Esophagus muscularis mucosa (tissue), 4 donors: ENCODE measurements at regions of chr6 and their contacts with region 1.

Region 1: DNA sequence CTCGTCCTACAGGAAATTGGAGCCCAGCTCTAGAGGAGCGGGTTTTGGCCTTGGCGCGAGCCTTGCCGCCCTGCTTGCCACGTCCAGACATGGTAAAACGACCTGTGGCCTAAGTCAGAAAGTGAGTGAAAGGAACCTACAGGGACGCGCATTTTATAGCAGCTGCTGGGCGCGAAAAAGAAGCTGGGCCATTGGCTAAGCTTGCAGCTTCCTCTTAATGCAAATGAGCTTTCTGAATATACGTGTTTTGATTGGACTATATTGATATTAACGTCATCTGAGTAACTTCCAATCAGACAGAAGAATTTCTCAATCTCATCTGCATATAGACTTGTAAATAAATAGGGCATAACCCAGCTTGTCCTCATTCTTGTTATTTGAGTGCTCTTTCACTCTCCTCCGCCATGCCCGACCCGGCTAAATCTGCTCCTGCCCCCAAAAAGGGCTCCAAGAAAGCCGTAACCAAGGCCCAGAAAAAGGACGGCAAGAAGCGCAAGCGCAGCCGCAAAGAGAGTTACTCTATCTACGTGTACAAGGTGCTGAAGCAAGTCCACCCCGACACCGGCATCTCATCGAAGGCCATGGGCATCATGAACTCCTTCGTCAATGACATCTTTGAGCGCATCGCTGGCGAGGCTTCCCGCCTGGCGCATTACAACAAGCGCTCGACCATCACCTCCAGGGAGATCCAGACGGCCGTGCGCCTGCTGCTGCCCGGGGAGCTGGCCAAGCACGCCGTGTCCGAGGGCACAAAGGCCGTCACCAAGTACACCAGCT is 18.9 kb downstream of the OR2B2 start:
- DNase-seq: peak; percentile 94
- H3K4me3 ChIP-seq: peak overlapping the region; percentile 59 to 78 (median 67)
- H3K27ac ChIP-seq: peak overlapping the region; percentile 40 to 85 (median 50)
- H3K4me1 ChIP-seq: peaks cover 25 to 34% (median 30%) of the 10 kb centered on the region in 4 donors
- H3K27me3 ChIP-seq: peaks cover 0 to 56% (median 36%) of the 10 kb centered on the region in 4 donors
- CTCF ChIP-seq: no peak
- EP300 ChIP-seq: no peak
- POLR2A ChIP-seq: no peak

Region 2: GRCh38 chr6:26629359-26629758 is 1263.9 kb before region 1 on chr6:
- intact Hi-C with region 1: no loop called
- DNase-seq: no peak
- H3K4me3 ChIP-seq: no peak overlapping the region
- H3K27ac ChIP-seq: no peak overlapping the region
- H3K4me1 ChIP-seq: no peaks in the 10 kb centered on the region
- H3K27me3 ChIP-seq: no peaks in the 10 kb centered on the region
- CTCF ChIP-seq: no peak
- EP300 ChIP-seq: no peak
- POLR2A ChIP-seq: no peak

Region 3: DNA sequence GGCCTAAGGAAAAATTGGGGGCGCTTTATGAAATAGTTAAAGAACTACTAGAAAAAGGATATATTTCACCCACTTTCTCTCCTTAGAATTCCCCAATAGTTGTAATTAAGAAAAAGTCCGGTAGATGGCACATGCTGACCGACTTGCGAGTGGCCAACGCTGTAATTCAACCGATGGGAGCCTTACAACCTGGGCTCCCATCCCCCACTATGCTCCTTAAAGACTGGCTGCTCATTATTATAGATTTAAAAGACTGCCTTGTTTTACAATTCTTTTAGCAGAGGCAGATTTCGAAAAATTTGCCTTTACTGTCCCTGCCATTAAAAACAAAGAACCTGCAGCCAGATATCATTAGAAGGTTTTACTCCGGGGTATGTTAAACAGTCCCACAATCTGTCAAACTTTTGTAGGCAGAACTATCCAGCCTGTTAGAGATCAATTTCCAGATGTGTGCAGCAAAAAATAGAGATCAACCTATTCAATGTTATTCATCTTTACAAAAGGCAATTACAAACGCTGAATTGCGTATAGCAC is 704.3 kb before region 1 on chr6:
- intact Hi-C with region 1: loop called (anchors 5 kb)
- DNase-seq: no peak
- H3K4me3 ChIP-seq: peak overlapping the region; percentile 57 to 70 (median 66)
- H3K27ac ChIP-seq: peak overlapping the region; percentile 76 to 82 (median 80)
- H3K4me1 ChIP-seq: peaks cover 0 to 9% (median 6%) of the 10 kb centered on the region in 4 donors
- H3K27me3 ChIP-seq: peaks cover 0 to 15% (median 0%) of the 10 kb centered on the region in 4 donors
- CTCF ChIP-seq: peak; percentile 77 to 79 (median 78)
- EP300 ChIP-seq: no peak
- POLR2A ChIP-seq: no peak

Region 4: GRCh38 chr6:27503436-27504030 is 389.7 kb before region 1 on chr6:
- intact Hi-C with region 1: loop called (anchors 10 kb)
- DNase-seq: no peak
- H3K4me3 ChIP-seq: peak overlapping the region; percentile 43 to 55 (median 48)
- H3K27ac ChIP-seq: peak overlapping the region in 1 of 4 donors; percentile 15
- H3K4me1 ChIP-seq: peaks cover 7 to 15% (median 13%) of the 10 kb centered on the region in 4 donors
- H3K27me3 ChIP-seq: peaks cover 0 to 45% (median 5%) of the 10 kb centered on the region in 4 donors
- CTCF ChIP-seq: no peak
- EP300 ChIP-seq: no peak
- POLR2A ChIP-seq: no peak

Region 5: DNA sequence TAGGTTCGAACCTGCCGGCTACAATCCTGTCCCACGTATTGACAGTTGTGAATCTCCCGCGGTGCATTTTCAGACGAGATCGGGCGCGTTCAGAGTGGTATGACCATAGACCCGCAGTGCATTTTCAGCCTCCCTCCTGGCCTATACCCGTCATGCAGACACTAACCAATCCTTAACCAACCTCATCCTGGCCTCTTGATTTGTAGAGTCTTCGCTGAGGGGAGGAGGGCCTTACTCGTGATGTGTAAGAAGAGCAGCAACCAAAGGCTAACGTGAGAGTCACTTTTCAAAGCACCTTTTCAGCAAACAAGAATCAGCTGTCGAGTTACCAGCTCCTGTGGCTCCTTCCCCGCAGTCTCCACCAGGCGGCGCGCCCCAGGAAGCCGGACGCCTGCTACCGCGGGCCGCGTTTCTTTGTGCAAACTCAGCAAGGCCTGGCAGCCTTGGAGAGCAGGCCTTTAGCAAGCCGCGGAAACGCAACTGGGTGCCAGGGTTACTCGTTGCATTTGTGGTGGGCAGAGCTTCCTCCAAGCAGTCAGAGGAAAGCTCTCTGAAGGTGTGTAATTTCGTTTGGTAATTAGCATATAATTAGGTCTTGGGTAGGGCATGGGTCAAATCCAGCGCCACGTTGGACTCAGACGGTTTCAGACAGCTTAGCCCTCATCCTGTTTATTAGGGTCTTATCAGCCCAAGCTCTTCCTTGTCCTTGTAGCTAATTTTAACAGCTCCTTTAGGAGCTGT is 120.8 kb before region 1 on chr6:
- intact Hi-C with region 1: loop called (anchors 2 kb)
- DNase-seq: peak; percentile 95
- H3K4me3 ChIP-seq: peak overlapping the region in 1 of 4 donors; percentile 18
- H3K27ac ChIP-seq: no peak overlapping the region
- H3K4me1 ChIP-seq: peaks cover 0 to 11% (median 8%) of the 10 kb centered on the region in 4 donors
- H3K27me3 ChIP-seq: peaks cover 0 to 66% (median 5%) of the 10 kb centered on the region in 4 donors
- CTCF ChIP-seq: peak; percentile 87 to 94 (median 89)
- EP300 ChIP-seq: no peak
- POLR2A ChIP-seq: no peak

Region 6: GRCh38 chr6:27795697-27796494 is 97.4 kb before region 1 on chr6:
- intact Hi-C with region 1: loop called (anchors 2 kb)
- DNase-seq: no peak
- H3K4me3 ChIP-seq: no peak overlapping the region
- H3K27ac ChIP-seq: no peak overlapping the region
- H3K4me1 ChIP-seq: peaks cover 4 to 23% (median 18%) of the 10 kb centered on the region in 4 donors
- H3K27me3 ChIP-seq: peaks cover 0 to 30% (median 0%) of the 10 kb centered on the region in 4 donors
- CTCF ChIP-seq: peak; percentile 73 to 90 (median 80)
- EP300 ChIP-seq: no peak
- POLR2A ChIP-seq: no peak

Region 7: DNA sequence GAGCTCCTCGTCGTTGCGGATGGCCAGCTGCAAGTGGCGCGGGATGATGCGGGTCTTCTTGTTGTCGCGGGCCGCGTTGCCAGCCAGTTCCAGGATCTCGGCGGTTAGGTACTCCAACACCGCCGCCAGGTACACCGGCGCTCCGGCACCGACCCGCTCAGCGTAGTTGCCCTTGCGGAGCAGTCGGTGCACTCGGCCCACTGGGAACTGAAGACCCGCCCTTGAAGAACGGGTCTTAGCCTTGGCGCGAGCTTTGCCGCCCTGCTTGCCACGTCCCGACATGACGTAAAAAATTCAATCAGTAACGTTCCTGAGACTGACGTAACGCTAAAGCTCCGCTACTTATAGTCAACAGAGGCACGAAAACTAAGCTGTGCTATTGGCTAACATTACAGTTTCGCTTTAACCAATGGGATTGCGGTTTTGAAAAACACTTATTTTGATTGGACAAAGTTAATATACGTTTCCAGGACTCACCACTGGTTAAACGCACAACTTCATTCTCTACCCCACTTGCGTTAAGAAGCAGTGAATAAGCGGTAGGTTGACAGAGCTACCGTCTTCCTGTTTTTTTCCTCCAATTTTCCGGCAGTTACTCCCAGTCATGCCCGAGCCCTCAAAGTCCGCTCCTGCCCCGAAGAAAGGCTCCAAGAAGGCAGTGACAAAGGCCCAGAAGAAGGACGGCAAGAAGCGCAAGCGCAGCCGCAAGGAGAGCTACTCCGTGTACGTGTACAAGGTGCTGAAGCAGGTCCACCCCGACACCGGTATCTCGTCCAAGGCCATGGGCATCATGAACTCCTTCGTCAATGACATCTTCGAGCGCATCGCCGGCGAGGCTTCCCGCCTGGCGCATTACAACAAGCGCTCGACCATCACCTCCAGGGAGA is 54.9 kb before region 1 on chr6:
- intact Hi-C with region 1: loop called (anchors 5 kb)
- DNase-seq: peak; percentile 93
- H3K4me3 ChIP-seq: peak overlapping the region; percentile 69 to 90 (median 77)
- H3K27ac ChIP-seq: peak overlapping the region; percentile 89 to 96 (median 95)
- H3K4me1 ChIP-seq: peaks cover 18 to 30% (median 27%) of the 10 kb centered on the region in 4 donors
- H3K27me3 ChIP-seq: peaks cover 0 to 3% (median 0%) of the 10 kb centered on the region in 4 donors
- CTCF ChIP-seq: peak in 1 of 3 experiments; percentile 14
- EP300 ChIP-seq: no peak
- POLR2A ChIP-seq: peak; percentile 43

Region 8: DNA sequence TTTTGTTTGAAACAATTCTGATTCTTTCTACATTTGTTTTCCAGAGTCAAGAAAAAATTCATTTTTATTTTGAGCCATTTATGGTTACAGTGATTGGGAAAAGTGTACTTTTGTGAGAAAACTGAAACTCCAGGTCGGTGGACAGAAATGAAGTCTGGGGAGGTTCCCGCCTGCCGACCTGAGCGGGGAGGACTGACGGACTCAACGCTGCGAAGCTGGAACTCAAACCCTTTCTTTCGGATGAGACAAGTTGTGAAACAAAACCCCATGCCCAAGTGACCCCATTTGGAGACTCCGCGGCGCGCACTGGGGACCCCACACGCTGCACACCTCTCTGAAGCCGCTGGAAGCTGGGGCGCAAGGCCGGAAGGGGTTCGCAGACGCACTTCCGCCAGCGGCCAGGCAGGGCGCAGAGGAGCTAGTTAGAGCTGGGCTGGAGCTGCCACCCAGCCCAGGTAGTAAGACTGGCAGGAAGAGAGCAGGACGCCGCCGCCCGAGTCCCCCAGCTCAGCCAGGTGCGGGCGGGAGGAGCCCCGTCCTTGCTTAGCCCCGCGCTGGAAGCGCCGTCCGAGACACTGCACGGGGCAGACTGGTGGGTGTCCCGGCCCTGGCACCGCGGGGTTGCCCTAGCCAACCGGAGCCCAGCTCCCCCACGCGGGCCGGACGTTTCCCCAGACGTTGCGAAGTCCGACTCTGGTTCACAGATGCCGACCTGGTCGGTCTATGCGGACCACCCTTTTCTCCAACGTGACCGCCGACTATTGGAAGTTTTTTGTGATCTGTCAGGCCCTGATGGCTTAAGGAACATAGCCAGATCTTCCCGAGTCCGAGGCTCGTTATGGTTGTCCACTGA is 211.4 kb after region 1 on chr6:
- intact Hi-C with region 1: no loop called
- DNase-seq: peak; percentile 93
- H3K4me3 ChIP-seq: peak overlapping the region; percentile 64 to 96 (median 80)
- H3K27ac ChIP-seq: peak overlapping the region; percentile 80 to 92 (median 84)
- H3K4me1 ChIP-seq: peaks cover 4 to 7% (median 6%) of the 10 kb centered on the region in 4 donors
- H3K27me3 ChIP-seq: no peaks in the 10 kb centered on the region
- CTCF ChIP-seq: peak; percentile 31 to 83 (median 40)
- EP300 ChIP-seq: no peak
- POLR2A ChIP-seq: no peak

Region 9: DNA sequence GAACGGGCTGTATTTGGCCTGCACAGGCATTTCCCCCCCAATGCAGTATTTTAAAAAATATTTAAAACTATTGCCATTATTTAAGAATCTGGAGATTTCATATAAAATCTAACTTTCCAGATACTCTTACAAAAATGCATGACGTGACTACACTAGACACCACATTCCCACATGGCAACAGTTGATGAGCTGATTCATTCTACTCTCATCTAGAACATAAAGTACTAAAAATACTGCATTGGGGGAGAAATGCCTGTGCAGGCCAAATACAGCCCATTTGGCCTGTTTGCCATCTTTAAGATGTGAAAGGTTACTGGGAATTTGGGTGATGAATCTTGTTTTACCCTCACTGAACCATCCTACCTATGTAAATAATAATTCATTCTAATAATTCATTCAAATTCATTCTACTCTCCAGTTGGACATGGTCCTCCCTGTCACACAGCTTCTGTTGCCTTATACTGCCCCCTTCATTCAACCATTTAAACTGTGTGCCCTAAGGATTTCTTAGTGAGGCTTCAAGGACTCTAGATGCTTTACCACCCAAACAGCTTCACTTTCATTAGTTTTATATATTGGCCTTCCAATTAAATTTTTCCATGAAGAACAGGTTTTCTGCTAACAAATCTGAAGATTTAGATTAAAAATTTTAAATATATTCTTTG is 224.3 kb after region 1 on chr6:
- intact Hi-C with region 1: no loop called
- DNase-seq: no peak
- H3K4me3 ChIP-seq: no peak overlapping the region
- H3K27ac ChIP-seq: no peak overlapping the region
- H3K4me1 ChIP-seq: no peaks in the 10 kb centered on the region
- H3K27me3 ChIP-seq: no peaks in the 10 kb centered on the region
- CTCF ChIP-seq: no peak
- EP300 ChIP-seq: no peak
- POLR2A ChIP-seq: no peak